ENCODE measurements at regions of chr1 and their contacts with region 1.

Region 1: GRCh38 chr1:100780814-100781213 is 61.3 kb downstream of the VCAM1 start:
- DNase-seq: no peak
- H3K4me3 ChIP-seq: no peak overlapping the region
- H3K27ac ChIP-seq: no peak overlapping the region
- H3K4me1 ChIP-seq: peaks cover 4% of the 10 kb centered on the region
- H3K27me3 ChIP-seq: no peaks in the 10 kb centered on the region
- CTCF ChIP-seq: no peak

Region 2: DNA sequence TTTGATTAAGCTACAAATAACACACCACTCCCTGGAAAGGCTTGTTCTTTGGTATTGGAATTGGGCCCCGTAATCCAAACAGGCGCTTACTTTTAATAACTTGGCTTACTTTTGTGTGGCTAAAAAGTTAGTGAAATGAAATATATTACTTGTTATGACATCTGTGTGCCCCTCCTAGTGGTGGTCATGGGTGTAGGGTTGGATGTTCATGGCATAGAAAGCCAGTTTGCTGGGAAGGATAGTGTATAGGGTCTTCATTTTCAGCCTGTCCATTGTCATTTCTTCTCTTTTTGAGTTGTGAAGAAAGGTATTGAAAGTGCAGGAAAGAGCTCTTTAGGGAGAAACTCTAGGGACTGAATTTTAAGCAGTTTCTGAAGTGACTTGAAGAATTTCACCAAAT is 422.6 kb before region 1 on chr1:
- CTCF ChIA-PET with region 1: no interaction called
- dilution Hi-C with region 1: no loop called
- in situ Hi-C with region 1: no loop called
- intact Hi-C with region 1: no loop called
- DNase-seq: no peak
- H3K4me3 ChIP-seq: no peak overlapping the region
- H3K27ac ChIP-seq: no peak overlapping the region
- H3K4me1 ChIP-seq: peaks cover 15% of the 10 kb centered on the region
- H3K27me3 ChIP-seq: no peaks in the 10 kb centered on the region
- CTCF ChIP-seq: peak; percentile 22 to 40

Region 3: GRCh38 chr1:100622037-100622436 is 158.8 kb before region 1 on chr1:
- CTCF ChIA-PET with region 1: no interaction called
- dilution Hi-C with region 1: no loop called
- in situ Hi-C with region 1: no loop called
- intact Hi-C with region 1: no loop called
- DNase-seq: peak; percentile 99
- H3K4me3 ChIP-seq: no peak overlapping the region
- H3K27ac ChIP-seq: peak overlapping the region; percentile 80
- H3K4me1 ChIP-seq: peaks cover 32% of the 10 kb centered on the region
- H3K27me3 ChIP-seq: no peaks in the 10 kb centered on the region
- CTCF ChIP-seq: no peak

Region 4: GRCh38 chr1:100816049-100816448 is 35.2 kb after region 1 on chr1:
- CTCF ChIA-PET with region 1: no interaction called
- dilution Hi-C with region 1: loop called (anchors 5 kb)
- in situ Hi-C with region 1: no loop called
- intact Hi-C with region 1: no loop called
- DNase-seq: no peak
- H3K4me3 ChIP-seq: no peak overlapping the region
- H3K27ac ChIP-seq: no peak overlapping the region
- H3K4me1 ChIP-seq: no peaks in the 10 kb centered on the region
- H3K27me3 ChIP-seq: no peaks in the 10 kb centered on the region
- CTCF ChIP-seq: no peak

Region 5: DNA sequence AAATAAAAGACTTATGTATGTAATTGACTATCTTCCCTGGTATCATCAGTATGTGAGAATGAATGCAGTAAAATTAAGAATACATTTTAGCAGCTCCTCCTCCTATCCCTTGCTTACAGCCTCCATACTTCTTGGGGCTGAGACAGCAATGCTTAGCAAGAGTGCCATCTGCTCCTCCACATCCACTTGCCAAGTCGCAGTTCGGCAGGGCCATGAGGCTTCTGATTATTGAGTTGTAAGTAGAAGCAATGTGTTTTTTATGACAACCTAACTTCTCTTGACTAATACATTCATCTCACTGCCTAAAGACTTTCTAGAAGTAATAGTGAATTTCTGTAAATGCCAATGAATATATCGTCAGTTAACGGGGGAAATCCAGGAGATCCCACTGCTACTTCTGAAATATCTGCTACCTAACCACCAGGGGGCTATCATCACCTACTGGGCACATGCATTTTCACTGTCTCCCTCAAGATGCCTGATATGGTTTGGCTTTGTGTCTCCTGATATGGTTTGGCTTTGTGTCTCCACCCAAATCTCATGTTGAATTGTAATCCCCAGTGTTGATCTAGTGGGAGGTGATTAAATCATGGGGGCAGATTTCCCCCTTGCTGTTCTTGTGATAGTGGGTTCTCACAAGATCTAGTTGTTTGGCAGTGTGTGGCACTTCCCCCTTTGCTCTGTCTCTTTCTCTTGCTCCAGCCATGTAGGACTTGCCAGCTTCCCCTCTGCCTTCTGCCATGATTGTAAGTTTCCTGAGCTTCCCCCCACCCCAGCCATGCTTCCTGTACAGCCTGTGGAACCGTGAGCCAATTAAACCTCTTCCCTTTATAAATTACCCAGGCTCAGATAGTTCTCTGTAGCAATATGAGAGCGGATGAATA is 54.2 kb after region 1 on chr1:
- CTCF ChIA-PET with region 1: no interaction called
- dilution Hi-C with region 1: no loop called
- in situ Hi-C with region 1: no loop called
- intact Hi-C with region 1: no loop called
- DNase-seq: peak; percentile 14
- H3K4me3 ChIP-seq: no peak overlapping the region
- H3K27ac ChIP-seq: no peak overlapping the region
- H3K4me1 ChIP-seq: peaks cover 10% of the 10 kb centered on the region
- H3K27me3 ChIP-seq: no peaks in the 10 kb centered on the region
- CTCF ChIP-seq: peak; percentile 32 to 49

Region 6: DNA sequence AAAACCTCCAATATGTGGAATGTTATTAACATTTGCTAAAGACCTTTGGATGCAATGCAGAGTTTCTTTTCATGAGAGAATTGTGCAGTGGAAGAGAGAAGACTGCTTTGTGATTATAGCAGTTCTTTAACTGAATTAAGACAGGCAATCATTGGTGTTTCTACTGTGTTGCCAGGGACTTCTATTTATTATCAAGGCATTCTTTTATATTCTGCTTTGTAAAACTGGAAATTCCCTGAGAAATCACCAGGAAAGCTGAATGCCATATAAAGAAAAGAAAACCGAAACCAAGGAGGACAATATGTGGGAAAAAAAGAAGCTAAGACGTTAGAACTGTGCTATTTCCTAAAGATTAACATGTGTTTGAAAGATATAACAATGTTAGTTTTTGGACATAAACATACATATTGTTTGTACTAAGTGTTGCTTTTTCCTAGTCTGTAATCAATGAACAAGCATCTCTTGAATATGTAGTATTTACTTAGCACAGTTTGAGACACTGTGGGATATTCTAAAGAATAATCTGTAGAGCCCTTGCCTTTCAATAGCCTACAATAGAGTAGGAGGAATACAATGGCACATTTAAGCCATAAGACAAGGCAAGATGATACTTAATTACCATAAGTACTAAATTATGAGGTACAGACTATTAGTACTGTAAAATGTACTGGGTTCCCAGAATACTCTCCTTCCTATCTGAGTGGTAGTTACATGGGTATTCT is 66.7 kb after region 1 on chr1:
- CTCF ChIA-PET with region 1: no interaction called
- dilution Hi-C with region 1: no loop called
- in situ Hi-C with region 1: no loop called
- intact Hi-C with region 1: no loop called
- DNase-seq: peak; percentile 55
- H3K4me3 ChIP-seq: peak overlapping the region in 1 of 3 experiments; percentile 13
- H3K27ac ChIP-seq: no peak overlapping the region
- H3K4me1 ChIP-seq: no peaks in the 10 kb centered on the region
- H3K27me3 ChIP-seq: no peaks in the 10 kb centered on the region
- CTCF ChIP-seq: no peak

Measured in mammary epithelial cell (primary cell).